ENCODE measurements at regions of chr1 and their contacts with region 1.

Region 1: GRCh38 chr1:40153073-40153770 is 8.0 kb upstream of the RLF start:
- DNase-seq: peak; percentile 52
- ATAC-seq: peak; percentile 82
- H3K4me3 Mint-ChIP-seq: peak overlapping the region; percentile 34
- H3K27ac Mint-ChIP-seq: peak overlapping the region; percentile 28
- H3K4me1 Mint-ChIP-seq: peaks cover 7% of the 10 kb centered on the region
- H3K27me3 Mint-ChIP-seq: no peaks in the 10 kb centered on the region
- CTCF ChIP-seq: peak; percentile 74

Region 2: DNA sequence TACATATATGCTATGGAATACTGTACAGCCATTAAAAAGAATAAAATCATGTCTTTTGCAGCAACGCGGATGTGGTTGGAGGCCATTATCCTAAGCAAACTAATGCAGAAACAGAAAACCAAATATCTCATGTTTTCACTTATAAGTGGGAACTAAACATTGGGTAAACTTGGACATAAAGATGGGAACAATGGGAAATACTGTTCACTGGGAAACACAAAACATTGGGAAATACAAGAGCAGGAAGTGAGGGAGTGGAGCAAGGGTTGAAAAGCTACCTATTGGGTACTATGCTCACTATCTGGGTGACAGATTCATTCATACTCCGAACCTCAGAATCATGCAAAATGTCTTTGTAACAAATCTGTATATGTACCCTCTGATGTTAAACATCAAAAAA is 38.8 kb before region 1 on chr1:
- CTCF ChIA-PET with region 1: interaction called, 11 read pairs
- POLR2A ChIA-PET with region 1: no interaction called
- intact Hi-C with region 1: no loop called
- DNase-seq: no peak
- ATAC-seq: no peak
- H3K4me3 Mint-ChIP-seq: no peak overlapping the region
- H3K27ac Mint-ChIP-seq: no peak overlapping the region
- H3K4me1 Mint-ChIP-seq: no peaks in the 10 kb centered on the region
- H3K27me3 Mint-ChIP-seq: peaks cover 22% of the 10 kb centered on the region
- CTCF ChIP-seq: no peak

Region 3: DNA sequence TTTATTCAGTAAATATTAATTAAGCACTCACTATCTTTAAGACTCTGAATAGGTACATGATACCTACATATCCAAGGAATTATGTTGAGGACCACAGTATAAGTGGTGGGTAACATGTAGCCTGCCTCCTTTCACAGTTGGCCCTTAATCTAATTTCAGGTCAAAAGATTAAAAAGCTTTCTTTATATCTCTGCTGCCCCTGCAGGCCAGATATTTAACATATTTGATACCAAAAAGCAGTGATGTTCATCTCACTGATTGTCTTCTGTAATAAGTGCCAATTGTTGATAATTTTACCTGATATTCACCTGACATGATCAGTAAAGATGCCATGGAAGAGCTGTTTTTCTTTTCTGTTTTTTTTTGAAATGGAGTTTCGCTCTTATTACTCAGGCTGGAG is 44.4 kb after region 1 on chr1:
- CTCF ChIA-PET with region 1: interaction called, 13 read pairs
- POLR2A ChIA-PET with region 1: no interaction called
- intact Hi-C with region 1: no loop called
- DNase-seq: no peak
- ATAC-seq: no peak
- H3K4me3 Mint-ChIP-seq: no peak overlapping the region
- H3K27ac Mint-ChIP-seq: no peak overlapping the region
- H3K4me1 Mint-ChIP-seq: peaks cover 8% of the 10 kb centered on the region
- H3K27me3 Mint-ChIP-seq: no peaks in the 10 kb centered on the region
- CTCF ChIP-seq: peak; percentile 29

Region 4: DNA sequence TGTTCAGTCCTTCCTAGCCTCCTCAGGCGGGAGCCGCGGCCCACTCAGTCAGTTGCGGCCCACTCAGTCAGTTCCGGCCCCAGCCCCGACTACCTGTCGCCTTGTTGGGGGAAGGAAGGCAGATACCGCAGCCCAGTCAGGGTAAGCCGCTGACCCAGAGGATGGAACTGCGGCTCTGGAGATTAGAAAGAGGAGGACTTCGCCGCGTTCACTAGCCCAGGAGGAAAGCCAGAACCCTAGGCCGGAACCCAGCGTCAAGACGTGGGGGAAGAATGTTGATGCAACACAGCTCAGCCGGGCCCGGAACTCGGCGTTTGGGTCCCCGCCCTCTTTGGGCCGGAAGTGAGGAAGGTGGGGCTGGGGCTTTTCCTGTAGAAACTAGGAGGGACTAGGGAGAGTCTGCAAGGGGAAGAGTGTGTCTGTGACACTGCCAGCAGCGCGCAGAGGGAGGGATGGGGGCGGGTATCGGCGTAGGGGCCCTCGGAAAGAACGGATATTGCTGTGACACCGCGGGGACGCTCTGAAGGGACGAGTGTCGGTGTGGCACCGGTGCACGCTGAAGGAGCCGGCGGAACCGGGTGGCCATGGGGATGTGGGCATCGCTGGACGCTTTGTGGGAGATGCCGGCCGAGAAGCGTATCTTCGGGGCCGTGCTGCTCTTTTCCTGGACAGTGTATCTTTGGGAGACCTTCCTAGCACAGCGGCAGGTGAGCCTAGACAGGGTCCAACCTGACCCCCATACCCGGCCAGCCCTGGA is 104.6 kb after region 1 on chr1 and contains the start of gene ZMPSTE24:
- CTCF ChIA-PET with region 1: interaction called, 11 read pairs
- POLR2A ChIA-PET with region 1: no interaction called
- intact Hi-C with region 1: no loop called
- DNase-seq: peak; percentile 98
- ATAC-seq: peak; percentile 97
- H3K4me3 Mint-ChIP-seq: peak within 1 kb of the TSS; percentile 94
- H3K27ac Mint-ChIP-seq: peak within 1 kb of the TSS; percentile 98
- H3K4me1 Mint-ChIP-seq: peaks cover 48% of the 10 kb centered on the region
- H3K27me3 Mint-ChIP-seq: no peaks in the 10 kb centered on the region
- CTCF ChIP-seq: no peak
- total RNA-seq, gene ZMPSTE24: 20.1 to 21.2 TPM

Region 5: DNA sequence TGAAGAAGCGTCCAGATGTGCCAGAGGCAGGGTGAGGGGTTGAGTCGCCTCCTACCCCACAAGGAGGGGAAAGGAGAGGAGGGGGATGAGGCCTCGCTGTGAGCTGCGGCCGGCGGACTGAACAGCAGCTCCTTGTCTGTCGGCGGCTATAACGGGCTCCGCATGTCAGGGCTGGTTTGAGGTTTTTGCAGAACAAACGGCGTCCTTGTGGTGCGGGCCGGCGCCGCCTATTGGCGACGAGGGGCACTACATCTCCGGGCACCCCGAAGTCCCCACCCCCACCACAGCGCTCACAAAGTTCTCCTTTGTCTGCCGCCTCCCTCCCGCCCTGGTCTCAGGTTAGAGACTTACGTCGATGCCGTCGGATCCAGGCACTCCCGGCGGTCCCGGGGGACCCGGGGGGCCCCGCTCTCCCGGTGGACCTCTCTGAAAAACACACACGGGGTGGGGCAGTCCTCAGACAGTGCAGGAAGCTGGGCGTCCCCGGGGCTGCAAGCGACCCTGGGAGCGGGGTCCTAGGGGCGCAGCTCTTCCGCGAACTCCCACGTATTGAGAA is 162.1 kb after region 1 on chr1:
- CTCF ChIA-PET with region 1: interaction called, 68 read pairs
- POLR2A ChIA-PET with region 1: interaction called, 3 read pairs
- intact Hi-C with region 1: loop called (anchors 10 kb)
- DNase-seq: peak; percentile 92
- ATAC-seq: peak; percentile 82
- H3K4me3 Mint-ChIP-seq: peak overlapping the region; percentile 79
- H3K27ac Mint-ChIP-seq: no peak overlapping the region
- H3K4me1 Mint-ChIP-seq: peaks cover 31% of the 10 kb centered on the region
- H3K27me3 Mint-ChIP-seq: peaks cover 9% of the 10 kb centered on the region
- CTCF ChIP-seq: peak; percentile 93

Region 6: DNA sequence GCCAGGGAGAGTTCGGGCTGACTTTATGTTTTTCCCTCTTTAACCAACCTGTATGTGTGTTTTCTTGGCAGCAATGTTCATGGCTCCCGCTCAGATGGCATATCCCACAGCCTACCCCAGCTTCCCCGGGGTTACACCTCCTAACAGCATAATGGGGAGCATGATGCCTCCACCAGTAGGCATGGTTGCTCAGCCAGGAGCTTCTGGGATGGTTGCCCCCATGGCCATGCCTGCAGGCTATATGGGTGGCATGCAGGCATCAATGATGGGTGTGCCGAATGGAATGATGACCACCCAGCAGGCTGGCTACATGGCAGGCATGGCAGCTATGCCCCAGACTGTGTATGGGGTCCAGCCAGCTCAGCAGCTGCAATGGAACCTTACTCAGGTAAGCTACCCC is 263.5 kb after region 1 on chr1:
- CTCF ChIA-PET with region 1: interaction called, 10 read pairs
- POLR2A ChIA-PET with region 1: no interaction called
- intact Hi-C with region 1: no loop called
- DNase-seq: no peak
- ATAC-seq: no peak
- H3K4me3 Mint-ChIP-seq: no peak overlapping the region
- H3K27ac Mint-ChIP-seq: peak overlapping the region; percentile 16
- H3K4me1 Mint-ChIP-seq: peaks cover 39% of the 10 kb centered on the region
- H3K27me3 Mint-ChIP-seq: no peaks in the 10 kb centered on the region
- CTCF ChIP-seq: no peak

Region 7: GRCh38 chr1:41268154-41268770 is 1115.0 kb after region 1 on chr1:
- CTCF ChIA-PET with region 1: no interaction called
- POLR2A ChIA-PET with region 1: no interaction called
- intact Hi-C with region 1: no loop called
- DNase-seq: peak; percentile 68
- ATAC-seq: peak; percentile 74
- H3K4me3 Mint-ChIP-seq: no peak overlapping the region
- H3K27ac Mint-ChIP-seq: no peak overlapping the region
- H3K4me1 Mint-ChIP-seq: no peaks in the 10 kb centered on the region
- H3K27me3 Mint-ChIP-seq: no peaks in the 10 kb centered on the region
- CTCF ChIP-seq: peak; percentile 99

Measured in activated CD8-positive, alpha-beta T cell treated with anti-CD3 and anti-CD28 coated beads for 36 hours (primary cell).